Tibial artery (tissue), 4 donors: ENCODE measurements at regions of chr16 and their contacts with region 1.

Region 1: DNA sequence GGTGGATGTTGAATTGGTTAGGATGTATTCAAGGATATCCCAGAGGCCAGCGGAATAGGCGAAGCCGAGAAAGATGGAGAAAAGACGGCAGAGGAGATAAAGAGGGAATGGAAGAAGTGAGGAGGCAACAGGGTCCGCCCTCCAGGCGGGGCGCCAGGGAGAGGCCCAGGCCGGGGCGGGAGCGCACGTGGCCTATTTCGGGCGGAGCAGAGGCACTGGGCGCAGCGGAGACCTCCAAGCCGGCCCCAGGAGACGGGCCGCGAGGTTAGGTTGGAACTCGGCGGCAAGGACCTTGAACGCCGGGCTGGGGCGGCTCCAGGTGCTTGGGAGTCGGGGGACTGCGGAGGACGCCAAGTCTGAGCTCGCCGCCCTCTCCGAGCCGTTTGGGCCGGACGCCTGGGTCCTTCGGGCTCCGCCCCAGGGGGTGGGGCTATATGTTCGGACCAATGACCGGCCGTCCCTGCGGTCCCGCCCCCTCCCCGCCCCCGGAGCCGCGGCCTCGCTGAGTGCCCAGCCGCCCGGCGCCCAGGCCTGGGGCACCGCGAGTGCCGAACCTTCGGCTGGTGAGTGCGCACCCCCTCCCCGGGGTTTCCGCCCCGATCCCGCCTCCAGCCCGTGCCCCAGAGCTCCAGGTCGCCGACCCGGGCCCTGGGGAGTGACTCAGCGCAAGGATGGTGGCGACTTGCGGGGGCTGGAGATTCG is at the start of gene ZNF771:
- DNase-seq: peak; percentile 94 to 97
- H3K4me3 ChIP-seq: peak within 1 kb of the TSS; percentile 62 to 65
- H3K27ac ChIP-seq: peak within 1 kb of the TSS; percentile 80 to 92
- H3K4me1 ChIP-seq: peaks cover 0 to 30% (median 22%) of the 10 kb centered on the region in 4 donors
- H3K27me3 ChIP-seq: no peaks in the 10 kb centered on the region
- CTCF ChIP-seq: no peak

Region 2: GRCh38 chr16:30065851-30066659 is 341.2 kb before region 1 on chr16:
- intact Hi-C with region 1: loop called (anchors 1 kb)
- DNase-seq: no peak
- H3K4me3 ChIP-seq: peak overlapping the region; percentile 98 to 99
- H3K27ac ChIP-seq: peak overlapping the region; percentile 96 to 97
- H3K4me1 ChIP-seq: peaks cover 0 to 63% (median 55%) of the 10 kb centered on the region in 4 donors
- H3K27me3 ChIP-seq: no peaks in the 10 kb centered on the region
- CTCF ChIP-seq: no peak

Region 3: GRCh38 chr16:30429418-30429677 is 22.1 kb after region 1 on chr16:
- intact Hi-C with region 1: no loop called
- DNase-seq: no peak
- H3K4me3 ChIP-seq: peak overlapping the region; percentile 56 to 63
- H3K27ac ChIP-seq: peak overlapping the region; percentile 65 to 69
- H3K4me1 ChIP-seq: peaks cover 0 to 20% (median 11%) of the 10 kb centered on the region in 4 donors
- H3K27me3 ChIP-seq: no peaks in the 10 kb centered on the region
- CTCF ChIP-seq: no peak